Spleen (tissue), 13 donors: ENCODE measurements at regions of chr12 and their contacts with region 1.

Region 1: DNA sequence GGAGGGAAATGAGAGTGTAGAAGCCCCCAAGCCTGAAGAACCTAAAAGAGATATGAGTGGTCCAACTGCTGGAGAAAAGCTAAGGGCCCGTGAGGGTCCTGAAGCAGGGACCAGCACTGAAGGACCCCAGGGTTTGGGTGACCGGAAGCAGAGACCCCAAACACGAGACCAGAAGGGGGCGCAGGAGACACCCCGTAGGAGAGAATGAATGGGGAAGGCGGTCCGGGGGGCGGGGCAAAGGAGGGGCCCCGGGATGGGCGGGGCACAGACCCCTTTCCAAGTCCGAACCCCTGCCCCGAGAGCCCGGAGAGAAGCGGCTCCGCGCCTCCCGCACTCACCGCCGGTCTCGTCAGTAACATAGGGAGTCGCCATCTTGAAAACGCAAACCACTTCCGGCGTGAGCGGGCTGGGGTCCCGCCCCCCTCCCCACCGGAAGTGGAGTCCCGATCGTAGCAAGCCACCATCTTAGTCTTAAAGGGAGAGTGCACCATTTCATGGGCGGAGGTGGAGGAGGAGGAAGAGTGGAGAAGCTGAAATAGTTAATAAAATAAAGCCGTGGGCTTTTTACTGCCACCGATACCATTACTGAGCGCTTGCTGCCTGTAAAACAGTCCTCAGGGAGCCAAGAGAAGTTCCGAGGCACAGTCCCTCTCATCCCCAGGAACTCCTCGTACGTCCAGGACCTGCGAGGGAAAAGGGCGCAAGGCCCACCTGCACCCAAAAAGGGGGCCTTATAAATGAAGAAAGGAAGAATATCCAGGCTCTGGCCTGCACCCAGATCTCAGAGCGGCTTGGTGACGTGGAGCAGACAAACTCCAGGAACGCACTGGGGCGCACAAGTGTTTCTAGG is 731 bp downstream of the PYM1 start:
- DNase-seq: peak; percentile 98
- H3K4me3 ChIP-seq: peak overlapping the region; percentile 70 to 98 (median 88)
- H3K27ac ChIP-seq: peak overlapping the region; percentile 93 to 99 (median 96)
- H3K4me1 ChIP-seq: peaks cover 34 to 89% (median 66%) of the 10 kb centered on the region in 6 donors
- H3K27me3 ChIP-seq: no peaks in the 10 kb centered on the region
- CTCF ChIP-seq: peak; percentile 52 to 80 (median 73)
- POLR2A ChIP-seq: peak in 1 of 3 donors; percentile 30

Region 2: DNA sequence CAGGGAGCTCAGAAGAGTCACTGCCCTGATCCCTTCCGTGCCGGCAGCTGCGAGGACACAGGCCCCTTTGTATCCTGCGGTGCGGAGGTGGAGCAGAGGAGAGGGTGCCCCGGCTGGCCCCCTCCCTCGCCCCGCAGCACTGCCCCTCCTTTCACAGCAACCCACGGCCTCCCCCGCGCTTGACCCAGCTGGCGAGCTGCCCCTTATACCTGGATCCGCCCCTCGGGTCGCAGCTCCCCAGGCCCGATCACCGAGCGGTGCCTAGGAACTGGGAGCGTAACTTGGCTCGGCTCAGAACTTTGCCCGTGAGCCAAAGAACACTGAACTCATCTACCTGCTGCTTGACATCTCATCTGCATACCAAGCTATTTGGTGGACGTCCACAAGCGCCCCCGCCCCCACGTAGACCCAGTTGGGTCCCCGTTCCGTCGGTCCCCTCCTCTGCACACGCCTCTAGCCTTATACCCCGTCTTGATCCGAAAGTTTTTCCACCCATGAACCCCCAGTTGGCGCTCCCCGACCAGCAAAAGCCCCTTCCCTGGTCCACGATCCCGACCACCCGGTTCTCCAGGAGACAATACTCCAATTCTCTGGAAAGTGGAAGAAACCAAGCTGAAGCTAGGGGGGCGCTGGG is 96.9 kb before region 1 on chr12:
- intact Hi-C with region 1: loop called (anchors 5 kb)
- DNase-seq: peak; percentile 93
- H3K4me3 ChIP-seq: peak overlapping the region; percentile 74 to 96 (median 86)
- H3K27ac ChIP-seq: peak overlapping the region; percentile 85 to 94 (median 92)
- H3K4me1 ChIP-seq: peaks cover 25 to 72% (median 62%) of the 10 kb centered on the region in 6 donors
- H3K27me3 ChIP-seq: no peaks in the 10 kb centered on the region
- CTCF ChIP-seq: no peak
- POLR2A ChIP-seq: no peak

Region 3: GRCh38 chr12:55852740-55853139 is 74.2 kb before region 1 on chr12:
- intact Hi-C with region 1: no loop called
- DNase-seq: no peak
- H3K4me3 ChIP-seq: no peak overlapping the region
- H3K27ac ChIP-seq: no peak overlapping the region
- H3K4me1 ChIP-seq: peaks cover 0 to 21% (median 3%) of the 10 kb centered on the region in 6 donors
- H3K27me3 ChIP-seq: peaks cover 0 to 4% (median 0%) of the 10 kb centered on the region in 7 donors
- CTCF ChIP-seq: no peak
- POLR2A ChIP-seq: no peak